Right cardiac atrium (tissue), 5 donors: ENCODE measurements at regions of chr17 and their contacts with region 1.

Region 1: GRCh38 chr17:27760069-27760885 is 40.1 kb downstream of the NOS2 start:
- DNase-seq: peak; percentile 55 to 87 (median 86)
- ATAC-seq: peak in 1 of 2 donors; percentile 55
- H3K4me3 ChIP-seq: no peak overlapping the region
- H3K27ac ChIP-seq: no peak overlapping the region
- H3K4me1 ChIP-seq: no peaks in the 10 kb centered on the region
- H3K27me3 ChIP-seq: no peaks in the 10 kb centered on the region

Region 2: GRCh38 chr17:27609611-27610303 is 150.5 kb before region 1 on chr17:
- intact Hi-C with region 1: loop called in 1 of 4 experiments (anchors 5 kb)
- DNase-seq: peak in 2 of 3 donors; percentile 67 to 69
- ATAC-seq: peak; percentile 53 to 61
- H3K4me3 ChIP-seq: no peak overlapping the region
- H3K27ac ChIP-seq: no peak overlapping the region
- H3K4me1 ChIP-seq: no peaks in the 10 kb centered on the region
- H3K27me3 ChIP-seq: no peaks in the 10 kb centered on the region

Region 3: DNA sequence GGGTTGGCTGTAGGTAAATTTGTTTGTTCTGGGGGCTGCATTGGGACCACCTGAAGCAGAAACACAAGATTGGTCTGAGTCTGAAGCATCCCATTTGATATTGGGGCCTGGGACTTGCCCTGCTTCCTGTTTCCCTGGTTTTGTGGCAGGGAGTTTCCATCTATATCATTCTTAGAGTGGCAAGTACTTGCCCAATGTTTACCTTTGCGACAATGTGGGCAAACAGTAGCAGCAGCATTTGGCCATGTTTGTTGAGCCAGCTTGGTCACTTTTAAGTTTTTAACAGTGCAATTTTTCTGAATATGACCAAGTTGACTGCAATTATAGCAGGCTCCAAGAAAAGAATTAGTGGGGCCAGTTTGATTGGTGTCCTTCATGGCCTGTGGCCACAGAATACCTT is 67.5 kb before region 1 on chr17:
- intact Hi-C with region 1: no loop called
- DNase-seq: no peak
- ATAC-seq: no peak
- H3K4me3 ChIP-seq: no peak overlapping the region
- H3K27ac ChIP-seq: no peak overlapping the region
- H3K4me1 ChIP-seq: no peaks in the 10 kb centered on the region
- H3K27me3 ChIP-seq: no peaks in the 10 kb centered on the region

Region 4: DNA sequence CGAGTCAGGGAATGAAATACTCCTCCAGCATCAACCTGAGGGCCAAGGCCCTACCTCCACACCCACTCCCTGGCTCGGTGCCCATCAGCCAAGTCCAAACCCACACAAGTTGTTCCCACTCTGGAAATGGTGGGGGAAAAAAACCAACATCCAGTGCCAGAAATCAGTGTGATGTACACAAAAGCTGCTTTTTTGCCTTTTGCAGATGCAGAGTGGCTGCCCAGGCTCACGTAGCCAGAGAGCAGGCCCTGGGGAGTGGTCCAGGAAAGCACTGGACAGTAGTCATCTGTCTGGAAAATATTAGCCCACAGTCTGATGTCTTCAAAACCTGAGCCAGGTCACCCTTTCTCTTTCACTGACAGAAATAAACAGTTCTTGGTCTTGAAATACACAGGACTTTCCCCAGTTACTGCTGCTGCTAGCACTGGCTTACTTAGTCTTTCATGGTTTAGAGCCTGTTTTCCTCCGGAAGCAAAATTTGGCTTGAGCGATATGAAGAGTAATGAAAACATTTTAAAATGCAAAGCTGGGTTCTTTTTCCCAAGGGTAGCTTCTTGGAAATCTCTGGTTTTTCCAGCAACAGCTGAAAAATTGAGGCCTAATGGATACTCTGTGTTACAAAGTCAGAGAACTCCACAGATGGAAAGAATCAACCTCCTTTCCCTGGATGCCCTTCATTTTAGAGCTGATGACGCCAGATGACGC is 58.3 kb after region 1 on chr17:
- intact Hi-C with region 1: no loop called
- DNase-seq: peak; percentile 28 to 76 (median 62)
- ATAC-seq: peak; percentile 76 to 81
- H3K4me3 ChIP-seq: no peak overlapping the region
- H3K27ac ChIP-seq: no peak overlapping the region
- H3K4me1 ChIP-seq: no peaks in the 10 kb centered on the region
- H3K27me3 ChIP-seq: no peaks in the 10 kb centered on the region

Region 5: DNA sequence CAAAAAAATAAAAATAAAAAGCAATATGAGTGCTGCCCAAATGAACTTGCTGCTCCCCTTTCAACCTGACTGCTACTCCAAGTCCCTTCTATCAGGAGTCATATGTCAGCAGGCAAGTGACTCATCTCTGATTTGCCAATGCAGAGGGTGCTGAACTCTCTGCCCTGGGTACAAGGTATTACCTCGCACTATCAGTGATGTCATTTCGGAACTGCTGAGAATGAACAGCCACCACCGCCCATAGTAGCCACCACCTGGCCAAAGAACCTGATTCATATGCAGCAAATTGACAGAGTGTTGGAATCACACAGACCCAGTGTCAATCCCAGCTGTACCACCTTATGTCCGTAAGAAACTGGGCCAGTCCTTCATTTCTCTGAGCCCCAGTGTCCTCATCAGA is 101.7 kb after region 1 on chr17:
- intact Hi-C with region 1: no loop called
- DNase-seq: no peak
- ATAC-seq: no peak
- H3K4me3 ChIP-seq: no peak overlapping the region
- H3K27ac ChIP-seq: no peak overlapping the region
- H3K4me1 ChIP-seq: no peaks in the 10 kb centered on the region
- H3K27me3 ChIP-seq: no peaks in the 10 kb centered on the region